AG04449 (cell line): ENCODE measurements at regions of chr6 and their contacts with region 1.

Region 1: DNA sequence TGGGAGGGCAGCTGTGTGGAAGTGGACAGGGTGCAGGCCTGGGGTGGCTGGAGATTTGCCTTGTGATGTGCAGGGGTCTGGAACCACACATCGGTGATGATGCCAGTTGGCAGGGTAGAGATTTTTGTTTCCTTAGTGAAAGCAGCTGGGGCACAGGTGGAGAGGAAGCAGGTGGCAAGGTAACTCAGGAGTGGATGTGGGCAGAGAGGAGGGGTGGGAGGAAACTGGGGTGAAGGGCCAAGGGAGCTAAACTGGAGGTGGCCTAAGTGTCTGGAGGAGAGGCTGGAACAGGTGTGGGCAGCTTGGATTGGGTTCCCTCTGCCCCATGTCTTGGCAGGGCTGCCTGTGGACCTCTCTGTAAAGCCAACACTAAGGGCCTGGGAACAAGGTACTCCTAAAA is 4.7 kb upstream of the SCUBE3 start:
- DNase-seq: no peak
- H3K4me3 ChIP-seq: no peak overlapping the region
- CTCF ChIP-seq: no peak

Region 2: GRCh38 chr6:35178932-35179832 is 29.9 kb before region 1 on chr6:
- CTCF ChIA-PET with region 1: interaction called, 14 read pairs
- POLR2A ChIA-PET with region 1: no interaction called
- DNase-seq: no peak
- H3K4me3 ChIP-seq: no peak overlapping the region
- CTCF ChIP-seq: no peak

Region 3: GRCh38 chr6:35224720-35225119 is 15.6 kb after region 1 on chr6:
- CTCF ChIA-PET with region 1: interaction called, 41 read pairs
- POLR2A ChIA-PET with region 1: interaction called, 3 read pairs
- DNase-seq: no peak
- H3K4me3 ChIP-seq: no peak overlapping the region
- CTCF ChIP-seq: no peak

Region 4: DNA sequence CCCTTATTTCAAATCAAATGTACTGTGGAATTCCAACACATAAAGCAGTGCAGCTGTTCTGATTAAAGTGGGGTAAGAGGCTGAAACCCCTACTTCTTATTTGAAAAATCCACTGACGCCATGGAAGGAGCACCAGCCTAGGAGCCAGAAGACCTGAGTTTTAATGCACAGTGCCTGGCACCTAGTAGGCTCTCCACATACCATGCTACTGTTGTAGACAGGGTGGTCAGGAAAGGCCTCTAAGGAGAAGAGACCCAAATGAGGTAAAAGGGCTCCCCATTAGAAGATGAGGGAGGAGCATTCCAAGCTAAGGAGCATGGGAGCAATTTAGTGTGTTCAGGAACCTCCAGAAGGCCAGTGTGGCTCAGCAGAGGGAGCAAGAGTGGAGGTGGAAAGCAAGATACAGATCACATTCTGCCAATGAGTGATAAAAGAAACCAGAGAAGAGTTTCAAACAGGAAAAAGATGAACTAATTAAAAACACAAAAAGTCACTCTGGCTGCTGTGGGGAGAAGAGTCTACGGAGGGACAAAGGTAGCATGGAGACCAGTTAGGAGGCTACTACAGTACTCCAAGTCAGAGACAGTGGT is 38.7 kb after region 1 on chr6:
- CTCF ChIA-PET with region 1: interaction called, 10 read pairs
- POLR2A ChIA-PET with region 1: no interaction called
- DNase-seq: no peak
- H3K4me3 ChIP-seq: no peak overlapping the region
- CTCF ChIP-seq: no peak